Activated naive CD4-positive, alpha-beta T cell treated with anti-CD3 and anti-CD28 coated beads for 36 hours (primary cell): ENCODE measurements at regions of chr4 and their contacts with region 1.

Region 1: DNA sequence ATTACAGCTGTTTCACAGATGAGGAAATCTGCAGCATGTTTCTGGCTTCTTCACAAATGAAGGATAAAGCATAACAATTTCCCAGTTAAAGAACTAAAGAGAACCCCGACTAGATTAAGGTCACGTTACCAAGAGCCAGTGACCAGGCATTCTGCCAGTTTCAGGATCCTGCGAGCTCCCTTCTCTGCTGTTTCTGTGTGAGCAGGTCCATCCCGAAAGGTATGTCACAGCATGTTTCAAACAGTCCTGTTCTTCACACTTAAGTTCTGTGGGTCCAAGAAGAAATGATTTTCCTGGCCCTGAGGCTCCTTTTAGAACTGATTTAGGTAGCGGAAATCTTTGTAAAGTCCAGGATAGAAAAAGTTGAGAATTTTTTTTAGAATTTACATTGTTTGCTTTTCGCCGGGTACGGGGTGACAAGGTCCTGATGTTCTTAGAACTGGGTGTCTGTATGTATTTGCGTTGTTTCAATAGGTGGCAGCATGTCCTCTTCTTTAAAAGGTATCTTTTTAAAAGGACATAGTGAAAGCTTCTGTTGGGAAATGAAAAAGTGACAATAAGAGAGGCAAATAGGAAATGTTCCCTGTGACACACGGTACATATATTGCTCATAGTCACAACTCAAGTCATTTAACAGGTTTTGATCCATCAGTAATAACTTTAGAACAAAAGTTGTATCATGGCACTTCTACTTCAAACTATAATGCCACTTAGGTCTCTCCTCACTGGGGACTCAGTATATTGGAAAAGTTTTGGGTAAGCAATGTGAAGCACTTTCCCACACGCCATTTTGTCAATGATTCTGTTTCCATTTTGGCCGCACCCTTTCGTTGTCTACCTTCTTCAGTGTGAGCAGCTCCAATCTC is 18.4 kb downstream of the IL21 start:
- DNase-seq: peak; percentile 44
- H3K4me3 Mint-ChIP-seq: peak overlapping the region; percentile 48
- H3K27ac Mint-ChIP-seq: peak overlapping the region; percentile 79
- H3K4me1 Mint-ChIP-seq: peaks cover 43% of the 10 kb centered on the region
- H3K27me3 Mint-ChIP-seq: no peaks in the 10 kb centered on the region

Region 2: DNA sequence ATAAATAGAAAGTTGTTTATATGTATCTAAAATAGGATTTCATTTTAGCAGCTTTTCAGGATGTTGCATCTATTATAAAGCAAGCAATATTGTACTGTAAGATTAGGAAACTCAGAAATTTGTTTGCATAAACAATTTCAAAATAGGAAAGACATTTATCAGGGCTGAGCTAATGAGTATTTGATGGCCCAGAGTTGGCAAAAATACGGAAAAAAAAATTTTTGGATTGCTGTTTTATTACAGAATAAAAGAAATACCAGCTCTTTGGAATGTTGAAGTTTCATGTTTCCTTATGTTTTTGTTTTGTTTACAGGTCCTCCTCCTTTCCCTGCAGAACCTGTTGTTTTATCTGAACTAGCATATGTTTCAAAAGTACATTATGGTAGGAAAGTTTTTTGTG is 209.2 kb before region 1 on chr4:
- CTCF ChIA-PET with region 1: no interaction called
- intact Hi-C with region 1: no loop called
- DNase-seq: no peak
- H3K4me3 Mint-ChIP-seq: no peak overlapping the region
- H3K27ac Mint-ChIP-seq: no peak overlapping the region
- H3K4me1 Mint-ChIP-seq: no peaks in the 10 kb centered on the region
- H3K27me3 Mint-ChIP-seq: no peaks in the 10 kb centered on the region

Region 3: GRCh38 chr4:122617597-122618593 is 15.4 kb after region 1 on chr4:
- CTCF ChIA-PET with region 1: interaction called, 22 read pairs
- intact Hi-C with region 1: loop called (anchors 1 kb)
- DNase-seq: no peak
- H3K4me3 Mint-ChIP-seq: peak overlapping the region; percentile 88
- H3K27ac Mint-ChIP-seq: peak overlapping the region; percentile 97
- H3K4me1 Mint-ChIP-seq: peaks cover 70% of the 10 kb centered on the region
- H3K27me3 Mint-ChIP-seq: no peaks in the 10 kb centered on the region

Region 4: DNA sequence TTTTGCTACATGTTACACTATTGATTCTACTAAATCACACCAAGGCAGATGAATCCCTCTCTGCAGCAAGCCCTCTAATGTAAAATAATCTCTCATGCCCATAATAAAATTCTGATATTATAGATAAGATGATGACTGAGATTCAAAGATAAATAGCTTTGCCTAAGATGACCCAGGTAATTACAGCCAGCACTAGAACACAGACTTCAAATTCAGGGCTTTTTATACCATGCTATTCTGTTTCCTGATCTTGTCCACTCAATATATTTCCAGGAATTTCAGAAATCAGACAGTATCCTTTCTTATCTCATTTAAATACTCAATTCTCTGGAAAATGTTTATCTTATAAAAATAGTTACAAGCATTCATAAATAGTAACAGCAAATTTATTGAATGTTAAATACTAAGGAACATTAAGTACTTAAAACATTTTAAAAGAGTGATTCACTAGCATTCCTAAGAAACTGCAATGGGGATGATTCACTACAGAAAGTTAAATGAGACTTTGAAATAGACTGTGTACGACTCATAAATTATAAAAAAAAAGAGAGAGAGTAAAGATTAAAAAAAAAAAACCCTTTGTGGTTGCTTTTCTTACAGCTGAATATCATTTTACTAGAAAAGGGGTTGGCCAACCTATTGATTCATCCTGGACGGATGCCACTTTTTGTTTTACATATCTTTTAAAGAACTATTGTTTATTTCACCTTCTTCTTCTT is 64.2 kb after region 1 on chr4:
- CTCF ChIA-PET with region 1: interaction called, 29 read pairs
- intact Hi-C with region 1: loop called (anchors 1 kb)
- DNase-seq: peak; percentile 34
- H3K4me3 Mint-ChIP-seq: peak overlapping the region; percentile 45
- H3K27ac Mint-ChIP-seq: peak overlapping the region; percentile 96
- H3K4me1 Mint-ChIP-seq: peaks cover 82% of the 10 kb centered on the region
- H3K27me3 Mint-ChIP-seq: no peaks in the 10 kb centered on the region

Region 5: DNA sequence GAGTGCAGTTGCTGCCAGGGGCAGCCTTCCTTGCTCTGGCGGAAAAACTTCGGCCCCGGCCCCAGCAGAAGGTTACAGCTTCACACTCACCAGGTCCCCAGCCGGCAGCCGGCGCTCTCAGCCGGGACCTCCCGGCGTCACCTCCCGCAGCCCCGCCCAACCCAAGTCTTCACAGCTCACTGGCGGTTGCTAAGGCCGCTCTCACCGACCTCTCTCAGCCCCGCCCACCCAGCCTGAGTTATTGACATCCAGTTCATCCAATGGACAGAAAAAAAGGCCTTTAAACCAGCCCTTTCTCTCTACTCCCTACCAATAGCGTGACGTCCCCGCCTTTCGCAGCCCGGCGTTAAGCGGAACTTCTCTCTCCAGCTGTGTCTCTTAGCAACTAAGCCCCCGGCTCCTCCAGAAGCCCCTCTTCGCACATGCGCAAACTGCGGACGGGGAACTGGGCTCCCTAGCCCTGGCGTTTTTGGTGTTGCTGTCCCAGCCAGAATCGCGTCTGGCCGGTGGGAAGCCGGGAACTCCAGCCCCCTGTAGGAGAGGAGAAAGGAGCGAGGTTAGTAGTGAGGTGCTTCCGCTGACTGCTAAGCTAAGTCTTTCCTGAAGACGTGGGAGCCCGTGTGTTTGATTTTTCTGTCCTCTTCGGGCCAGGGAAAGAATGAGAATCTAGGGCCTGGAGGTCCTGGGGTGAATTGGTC is 130.0 kb after region 1 on chr4 and contains the start of gene BBS12:
- CTCF ChIA-PET with region 1: interaction called, 6 read pairs
- intact Hi-C with region 1: loop called (anchors 1 kb)
- DNase-seq: peak; percentile 100
- H3K4me3 Mint-ChIP-seq: peak within 1 kb of the TSS; percentile 91
- H3K27ac Mint-ChIP-seq: peak within 1 kb of the TSS; percentile 83
- H3K4me1 Mint-ChIP-seq: peaks cover 17% of the 10 kb centered on the region
- H3K27me3 Mint-ChIP-seq: no peaks in the 10 kb centered on the region
- total RNA-seq, gene BBS12: 1.7 to 2.2 TPM

Region 6: GRCh38 chr4:122922877-122923511 is 320.5 kb after region 1 on chr4:
- CTCF ChIA-PET with region 1: interaction called, 6 read pairs
- intact Hi-C with region 1: loop called (anchors 1 kb)
- DNase-seq: peak; percentile 94
- H3K4me3 Mint-ChIP-seq: peak overlapping the region; percentile 99
- H3K27ac Mint-ChIP-seq: peak overlapping the region; percentile 87
- H3K4me1 Mint-ChIP-seq: peaks cover 11% of the 10 kb centered on the region
- H3K27me3 Mint-ChIP-seq: peaks cover 2% of the 10 kb centered on the region

Region 7: GRCh38 chr4:123661080-123661737 is 1058.7 kb after region 1 on chr4:
- CTCF ChIA-PET with region 1: no interaction called
- intact Hi-C with region 1: loop called (anchors 10 kb)
- DNase-seq: no peak
- H3K4me3 Mint-ChIP-seq: no peak overlapping the region
- H3K27ac Mint-ChIP-seq: no peak overlapping the region
- H3K4me1 Mint-ChIP-seq: peaks cover 11% of the 10 kb centered on the region
- H3K27me3 Mint-ChIP-seq: peaks cover 20% of the 10 kb centered on the region

Region 8: DNA sequence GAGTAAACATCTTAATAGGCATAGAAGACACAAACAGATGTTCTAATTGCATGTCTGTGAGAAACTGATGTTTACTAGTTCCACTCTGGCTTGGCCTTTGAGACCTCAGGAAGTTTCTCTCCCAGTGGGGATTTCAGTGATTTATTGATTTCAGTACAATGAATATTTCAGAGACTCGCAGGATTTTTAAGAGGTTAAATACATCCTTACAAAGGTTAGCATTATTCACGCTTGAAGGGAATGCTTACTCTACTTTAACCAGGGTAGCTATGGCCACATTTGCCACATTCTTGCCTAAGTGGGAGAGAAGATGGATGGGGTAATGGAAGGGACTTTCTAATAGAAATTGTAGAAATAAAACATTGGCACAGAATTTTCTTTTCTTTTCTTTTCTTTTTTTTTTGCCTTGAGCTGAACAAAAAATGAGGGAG is 1274.2 kb after region 1 on chr4:
- CTCF ChIA-PET with region 1: no interaction called
- intact Hi-C with region 1: no loop called
- DNase-seq: no peak
- H3K4me3 Mint-ChIP-seq: no peak overlapping the region
- H3K27ac Mint-ChIP-seq: no peak overlapping the region
- H3K4me1 Mint-ChIP-seq: no peaks in the 10 kb centered on the region
- H3K27me3 Mint-ChIP-seq: no peaks in the 10 kb centered on the region